ENCODE measurements at regions of chr2 and their contacts with region 1.

Region 1: DNA sequence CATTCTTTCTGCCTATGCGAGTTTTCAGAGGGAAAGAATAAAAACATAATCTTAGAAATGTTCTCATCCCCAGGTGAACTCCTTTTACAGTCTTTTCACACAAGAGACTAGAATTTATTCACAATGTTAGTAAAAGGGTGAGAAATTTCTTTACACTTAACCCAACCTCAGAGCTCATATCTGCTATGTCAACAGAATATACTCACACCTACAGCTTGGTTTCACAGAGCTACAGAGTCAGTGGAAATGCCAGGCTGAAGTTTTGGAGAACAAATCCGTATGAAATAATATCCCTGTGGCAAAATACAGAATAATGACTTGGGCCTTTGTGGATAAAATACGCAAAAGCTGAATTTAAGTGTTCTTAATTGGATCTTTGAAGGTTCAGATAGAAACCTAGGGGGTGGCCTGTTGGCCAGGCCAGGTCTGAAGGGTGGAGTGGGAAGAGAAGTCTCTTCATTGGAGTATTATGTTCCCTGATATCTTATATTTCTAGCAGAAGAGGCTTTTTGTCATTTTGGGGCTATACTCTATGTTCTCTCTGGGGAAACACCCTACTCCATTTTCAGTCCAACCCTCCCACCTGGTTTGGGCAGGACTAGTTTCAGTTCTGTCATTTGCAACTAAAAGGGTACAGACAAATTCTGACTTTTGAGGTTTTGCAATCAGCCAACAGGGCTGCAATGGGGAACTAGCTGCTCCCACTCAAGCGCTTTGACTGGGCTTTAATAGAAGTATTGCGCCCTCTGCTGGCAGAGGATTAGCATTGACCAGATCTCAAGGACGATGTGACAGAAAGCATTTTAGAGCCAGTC is 25.7 kb downstream of the FBXO48 start:
- DNase-seq: no peak
- H3K4me3 ChIP-seq: no peak overlapping the region
- CTCF ChIP-seq: peak; percentile 79

Region 2: DNA sequence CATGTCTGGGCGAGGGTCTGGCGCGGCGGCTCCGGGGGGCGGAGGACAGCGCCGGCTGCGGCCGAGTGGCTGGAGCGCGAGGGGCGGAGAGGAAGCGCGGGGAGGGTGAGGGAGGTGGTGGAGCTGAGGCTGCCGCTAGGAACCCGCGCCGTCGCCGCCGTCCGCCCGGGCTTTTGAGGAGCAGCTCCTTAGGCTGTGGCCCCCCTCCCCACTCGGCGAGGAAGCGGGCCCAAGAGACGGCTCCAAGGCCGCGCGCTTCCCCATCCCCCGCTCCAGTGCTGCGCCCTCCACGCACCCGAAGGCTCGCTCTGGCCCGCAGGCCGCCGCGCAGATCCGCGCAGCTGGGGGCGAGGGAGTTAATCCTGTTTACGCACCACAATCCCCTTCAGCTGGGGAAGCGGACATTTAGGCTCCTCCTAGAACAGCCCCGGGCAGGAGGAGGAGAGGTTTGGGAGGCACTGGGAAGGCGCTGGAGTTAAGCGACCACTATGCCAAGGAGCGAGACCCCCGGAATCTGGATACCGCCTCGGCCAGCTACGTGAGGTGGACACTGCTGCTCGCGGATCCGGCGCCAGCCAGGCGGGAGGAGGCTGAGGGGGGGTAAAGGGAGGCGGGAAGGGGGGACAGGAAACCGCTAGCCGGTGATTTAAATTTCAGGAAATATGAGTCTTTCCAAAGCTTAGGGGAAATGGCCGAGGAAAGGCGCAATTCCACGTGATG is 121.8 kb before region 1 on chr2 and contains the start of gene CNRIP1:
- CTCF ChIA-PET with region 1: interaction called, 12 read pairs
- POLR2A ChIA-PET with region 1: no interaction called
- DNase-seq: no peak
- H3K4me3 ChIP-seq: peak within 1 kb of the TSS; percentile 81
- CTCF ChIP-seq: peak; percentile 6

Region 3: GRCh38 chr2:68357605-68358337 is 83.6 kb before region 1 on chr2:
- CTCF ChIA-PET with region 1: interaction called, 23 read pairs
- POLR2A ChIA-PET with region 1: no interaction called
- DNase-seq: no peak
- H3K4me3 ChIP-seq: no peak overlapping the region
- CTCF ChIP-seq: peak; percentile 60

Region 4: GRCh38 chr2:68418855-68419254 is 22.5 kb before region 1 on chr2:
- CTCF ChIA-PET with region 1: interaction called, 11 read pairs
- POLR2A ChIA-PET with region 1: no interaction called
- DNase-seq: no peak
- H3K4me3 ChIP-seq: no peak overlapping the region
- CTCF ChIP-seq: no peak

Region 5: DNA sequence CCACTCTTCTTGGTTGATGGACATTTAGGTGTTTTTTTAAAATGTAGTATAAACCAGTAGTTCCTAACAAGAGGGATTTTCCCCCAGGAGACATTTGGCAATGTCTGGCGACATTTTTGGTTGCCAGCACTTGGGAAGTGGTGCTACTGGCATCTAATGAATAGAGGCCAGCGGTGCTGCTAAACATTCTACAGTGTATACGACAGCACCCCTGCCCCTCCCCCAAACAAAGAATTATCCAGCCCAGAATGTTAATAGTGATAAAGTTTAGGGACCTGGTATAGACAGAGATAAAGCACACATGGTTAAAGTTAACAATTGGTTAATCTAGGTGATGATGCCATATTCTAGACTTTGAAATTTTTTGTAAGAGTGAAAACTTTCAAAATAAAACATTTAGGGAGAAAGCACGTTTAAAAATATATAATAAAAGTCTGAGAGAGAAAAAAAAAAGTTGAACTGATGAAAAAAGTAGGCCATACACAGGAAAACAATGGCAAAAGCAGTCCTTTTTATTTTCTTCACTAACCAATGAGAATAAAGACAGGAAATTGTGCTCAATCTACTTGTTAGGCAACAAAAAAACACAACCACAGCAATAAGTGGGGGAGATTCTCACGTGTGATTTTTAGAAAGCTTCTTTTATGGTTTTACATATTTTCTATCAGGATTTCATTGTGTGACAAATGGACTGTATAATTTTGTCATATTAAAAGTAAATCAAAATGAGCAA is 10.9 kb after region 1 on chr2:
- CTCF ChIA-PET with region 1: interaction called, 17 read pairs
- POLR2A ChIA-PET with region 1: no interaction called
- DNase-seq: no peak
- H3K4me3 ChIP-seq: no peak overlapping the region
- CTCF ChIP-seq: no peak

Measured in AG04449 (cell line).